ENCODE measurements at regions of chr1 and their contacts with region 1.

Region 1: DNA sequence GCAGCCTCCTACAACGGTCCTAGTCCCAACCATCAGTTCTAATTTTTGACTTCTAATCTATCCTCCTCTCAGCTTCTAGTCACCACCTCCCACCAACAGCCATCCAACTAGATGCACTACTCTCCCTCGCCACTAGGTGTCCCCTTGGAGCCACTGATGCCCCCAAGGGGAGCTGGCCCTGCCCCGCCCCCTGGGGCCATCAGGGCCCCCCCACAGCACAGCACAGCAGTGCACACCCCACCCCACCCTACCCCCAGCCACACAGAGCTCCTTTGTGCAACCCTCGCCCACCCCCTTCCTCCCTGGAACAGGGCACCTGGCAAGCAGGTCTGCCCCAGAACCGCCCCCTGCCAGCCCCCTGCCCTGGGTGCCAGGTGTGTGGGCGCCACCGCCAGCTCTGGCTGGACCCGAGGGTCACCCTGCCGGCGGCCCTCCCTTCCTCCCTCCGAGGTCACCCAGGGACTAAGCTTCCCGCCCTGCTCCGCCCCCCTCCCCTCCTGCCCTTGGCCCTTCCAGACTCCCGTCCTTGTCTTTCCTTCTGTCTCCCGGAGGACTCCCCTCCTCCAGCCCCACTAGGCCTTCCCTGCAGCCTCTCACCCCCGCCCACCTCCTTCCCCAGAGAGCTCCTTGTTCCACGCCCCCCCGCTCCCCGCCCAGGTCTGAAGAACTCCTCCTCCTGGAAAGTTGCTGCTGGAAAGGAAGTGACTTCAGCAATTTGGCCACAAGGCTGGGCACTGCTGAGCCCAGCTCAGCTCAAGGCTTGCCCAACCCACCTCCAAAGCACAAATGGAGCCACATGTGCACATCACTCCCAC is 47.0 kb downstream of the AHDC1 start:
- DNase-seq: peak; percentile 86
- H3K4me3 Mint-ChIP-seq: no peak overlapping the region
- H3K27ac Mint-ChIP-seq: peak overlapping the region; percentile 6
- H3K4me1 Mint-ChIP-seq: peaks cover 21% of the 10 kb centered on the region
- H3K27me3 Mint-ChIP-seq: no peaks in the 10 kb centered on the region

Region 2: GRCh38 chr1:27402349-27402754 is 154.6 kb before region 1 on chr1:
- CTCF ChIA-PET with region 1: interaction called, 11 read pairs
- intact Hi-C with region 1: loop called (anchors 1 kb)
- DNase-seq: peak; percentile 53
- H3K4me3 Mint-ChIP-seq: no peak overlapping the region
- H3K27ac Mint-ChIP-seq: peak overlapping the region; percentile 74
- H3K4me1 Mint-ChIP-seq: peaks cover 19% of the 10 kb centered on the region
- H3K27me3 Mint-ChIP-seq: no peaks in the 10 kb centered on the region

Region 3: GRCh38 chr1:27542408-27543273 is 14.3 kb before region 1 on chr1:
- CTCF ChIA-PET with region 1: interaction called, 11 read pairs
- intact Hi-C with region 1: no loop called
- DNase-seq: peak; percentile 59
- H3K4me3 Mint-ChIP-seq: no peak overlapping the region
- H3K27ac Mint-ChIP-seq: peak overlapping the region; percentile 50
- H3K4me1 Mint-ChIP-seq: peaks cover 14% of the 10 kb centered on the region
- H3K27me3 Mint-ChIP-seq: no peaks in the 10 kb centered on the region

Region 4: GRCh38 chr1:27568300-27569087 is 11.5 kb after region 1 on chr1:
- CTCF ChIA-PET with region 1: interaction called, 93 read pairs
- intact Hi-C with region 1: no loop called
- DNase-seq: peak; percentile 96
- H3K4me3 Mint-ChIP-seq: peak overlapping the region; percentile 63
- H3K27ac Mint-ChIP-seq: no peak overlapping the region
- H3K4me1 Mint-ChIP-seq: peaks cover 13% of the 10 kb centered on the region
- H3K27me3 Mint-ChIP-seq: no peaks in the 10 kb centered on the region

Region 5: GRCh38 chr1:27634177-27634984 is 77.4 kb after region 1 on chr1:
- CTCF ChIA-PET with region 1: no interaction called
- intact Hi-C with region 1: no loop called
- DNase-seq: peak; percentile 57
- H3K4me3 Mint-ChIP-seq: peak overlapping the region; percentile 46
- H3K27ac Mint-ChIP-seq: no peak overlapping the region
- H3K4me1 Mint-ChIP-seq: peaks cover 65% of the 10 kb centered on the region
- H3K27me3 Mint-ChIP-seq: no peaks in the 10 kb centered on the region

Region 6: GRCh38 chr1:27934818-27935549 is 378.0 kb after region 1 on chr1 and contains the start of gene SMPDL3B:
- CTCF ChIA-PET with region 1: no interaction called
- intact Hi-C with region 1: no loop called
- DNase-seq: no peak
- H3K4me3 Mint-ChIP-seq: peak within 1 kb of the TSS; percentile 67
- H3K27ac Mint-ChIP-seq: no peak within 1 kb of the TSS
- H3K4me1 Mint-ChIP-seq: peaks cover 10% of the 10 kb centered on the region
- H3K27me3 Mint-ChIP-seq: peaks cover 15% of the 10 kb centered on the region
- total RNA-seq, gene SMPDL3B: 0.52 to 0.72 TPM

Measured in activated naive CD4-positive, alpha-beta T cell treated with anti-CD3 and anti-CD28 coated beads for 36 hours (primary cell).